ENCODE measurements at regions of chr10 and their contacts with region 1.

Region 1: DNA sequence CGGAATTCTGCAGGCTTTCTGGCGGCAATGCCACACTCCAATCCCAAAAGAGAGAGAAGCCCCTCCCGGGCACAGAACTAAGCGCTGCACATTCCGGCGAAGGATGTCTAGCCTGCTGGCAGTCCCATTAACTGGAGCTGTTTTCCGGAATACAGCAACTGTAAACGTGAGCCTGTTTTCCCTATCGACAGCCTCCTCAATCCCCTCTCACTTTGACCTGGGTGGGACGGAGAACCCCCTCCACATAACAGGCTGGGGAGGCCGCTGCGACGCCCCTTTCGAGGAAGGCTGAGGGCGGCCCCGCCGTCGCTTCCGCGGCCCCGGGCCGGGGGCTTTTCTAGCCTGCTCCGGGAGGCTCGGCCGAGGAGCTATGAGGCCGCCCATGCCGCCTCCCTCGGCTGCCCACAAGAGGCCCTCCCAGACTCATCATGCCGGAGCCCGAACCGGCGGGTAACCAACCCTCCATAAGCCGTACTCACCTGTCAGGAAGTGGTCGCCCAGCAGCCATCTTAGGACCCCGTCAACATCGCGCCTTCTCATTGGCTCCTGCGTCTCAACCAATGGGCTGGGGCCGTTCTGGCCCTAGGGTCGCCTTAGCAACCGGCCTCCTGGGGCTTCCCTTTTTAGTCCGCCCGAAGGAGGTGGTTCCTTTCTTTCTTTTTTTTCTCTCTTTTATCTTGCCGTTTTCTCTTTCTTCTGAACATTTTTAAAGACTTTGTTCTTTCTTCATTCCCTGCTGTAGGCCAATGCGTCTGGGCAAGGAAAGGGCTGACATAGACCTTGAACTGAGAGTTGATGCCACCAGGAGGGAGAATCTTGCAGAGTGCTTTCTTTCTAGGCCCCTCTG is at the start of gene FAM204A:
- DNase-seq: peak; percentile 93 to 98 (median 98)
- ATAC-seq: peak; percentile 100
- H3K4me3 ChIP-seq: peak within 1 kb of the TSS; percentile 95
- H3K27ac ChIP-seq: peak within 1 kb of the TSS; percentile 71
- H3K4me1 ChIP-seq: peaks cover 0 to 4% of the 10 kb centered on the region in 2 experiments; a peak in 2 of 5 replicates
- H3K27me3 ChIP-seq: no peaks in the 10 kb centered on the region
- CTCF ChIP-seq: no peak
- EP300 ChIP-seq: no peak
- POLR2A ChIP-seq: peak; percentile 82
- RAD21 ChIP-seq: no peak
- polyA plus RNA-seq, gene FAM204A: 57.6 to 64.5 TPM

Region 2: GRCh38 chr10:118423800-118424479 is 81.9 kb after region 1 on chr10:
- CTCF ChIA-PET with region 1: no interaction called
- POLR2A ChIA-PET with region 1: interaction called, 3 read pairs
- in situ Hi-C with region 1: no loop called
- intact Hi-C with region 1: loop called (anchors 10 kb)
- DNase-seq: peak; percentile 55 to 79 (median 64)
- ATAC-seq: peak; percentile 98
- H3K4me3 ChIP-seq: no peak overlapping the region
- H3K27ac ChIP-seq: no peak overlapping the region
- H3K4me1 ChIP-seq: no peaks in the 10 kb centered on the region
- H3K27me3 ChIP-seq: peaks cover 0 to 5% of the 10 kb centered on the region in 2 experiments; a peak in 1 of 5 replicates
- CTCF ChIP-seq: peak; percentile 72 to 79 (median 77)
- EP300 ChIP-seq: no peak
- POLR2A ChIP-seq: no peak
- RAD21 ChIP-seq: peak; percentile 47 to 72

Measured in K562 (cell line).